Motor neuron (in vitro differentiated cells): ENCODE measurements at regions of chr10 and their contacts with region 1.

Region 1: DNA sequence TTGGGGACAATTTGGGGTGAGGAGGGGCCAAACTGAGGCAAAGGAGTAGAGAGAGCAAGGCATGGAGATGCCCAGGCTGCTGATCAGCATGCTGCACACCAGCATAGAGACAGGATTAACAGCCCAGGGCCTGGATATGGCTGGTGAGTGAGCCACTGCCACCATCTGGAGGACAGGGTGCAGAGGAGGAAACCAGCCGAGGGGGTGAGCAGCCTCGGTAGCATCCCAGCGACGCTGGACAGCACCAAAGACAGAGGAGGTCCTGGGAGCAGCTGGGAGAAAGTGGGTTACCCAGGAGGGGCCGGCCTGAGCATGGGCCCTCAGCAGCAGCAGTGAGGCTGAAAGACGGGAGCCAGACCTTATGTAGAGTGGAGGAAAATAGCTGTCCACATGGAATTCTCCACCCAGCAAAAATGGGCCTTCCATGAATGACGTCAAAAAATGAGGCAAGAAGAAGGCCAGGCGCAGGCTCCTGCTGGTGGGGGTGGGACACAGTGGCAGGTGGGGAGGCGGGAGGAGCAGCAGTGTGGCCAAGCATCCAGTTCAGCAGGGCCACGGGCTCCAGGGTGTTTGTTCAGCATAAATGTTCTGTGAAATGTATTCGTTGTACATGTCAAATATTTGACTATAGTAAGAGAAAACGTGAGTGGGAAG is 16.7 kb downstream of the RET start:
- ATAC-seq: peak; percentile 71 to 97 (median 90)
- H3K4me3 ChIP-seq: no peak overlapping the region
- H3K27ac ChIP-seq: peak overlapping the region in 1 of 2 donors; percentile 19
- H3K4me1 ChIP-seq: peaks cover 0 to 7% of the 10 kb centered on the region in 2 donors

Region 2: DNA sequence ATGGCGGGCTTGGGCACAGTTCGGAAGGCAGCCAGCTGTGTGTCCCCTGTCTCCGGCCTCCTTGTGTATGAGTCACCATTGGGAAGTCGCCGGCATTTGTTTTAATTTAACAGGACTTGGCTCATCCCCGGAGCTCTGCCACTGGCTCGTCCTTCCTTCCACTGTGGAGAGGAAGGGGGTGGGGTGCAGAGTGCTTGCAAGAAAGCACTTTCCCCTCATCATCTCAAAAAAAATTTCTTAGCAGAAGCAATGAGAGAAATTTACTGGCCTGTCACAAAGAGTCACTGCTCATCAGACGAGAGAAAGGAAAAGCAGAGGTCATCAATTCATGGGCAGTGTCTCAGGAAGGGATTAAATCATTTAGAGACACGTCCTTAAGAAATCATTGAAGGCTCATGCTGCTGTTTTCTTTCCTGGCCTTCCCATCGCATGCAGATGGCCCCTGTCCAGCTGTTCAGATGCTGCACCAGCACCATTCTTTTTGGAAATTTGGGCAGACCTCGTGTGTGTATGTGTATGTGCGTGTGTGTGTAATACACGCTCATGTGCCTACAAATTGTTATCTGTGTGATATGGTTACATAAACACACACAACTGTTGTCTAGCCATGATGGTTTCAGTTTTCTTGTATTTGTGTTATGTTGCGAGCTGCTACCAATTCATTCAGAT is 217.6 kb before region 1 on chr10:
- in situ Hi-C with region 1: loop called in 2 of 9 experiments (anchors 10 to 25 kb)
- ATAC-seq: peak in 7 of 8 experiments; percentile 90 to 99 (median 98)
- H3K4me3 ChIP-seq: no peak overlapping the region
- H3K27ac ChIP-seq: peak overlapping the region in 1 of 2 donors; percentile 57
- H3K4me1 ChIP-seq: peaks cover 0 to 4% of the 10 kb centered on the region in 2 donors